ENCODE measurements at regions of chr4 and their contacts with region 1.

Region 1: DNA sequence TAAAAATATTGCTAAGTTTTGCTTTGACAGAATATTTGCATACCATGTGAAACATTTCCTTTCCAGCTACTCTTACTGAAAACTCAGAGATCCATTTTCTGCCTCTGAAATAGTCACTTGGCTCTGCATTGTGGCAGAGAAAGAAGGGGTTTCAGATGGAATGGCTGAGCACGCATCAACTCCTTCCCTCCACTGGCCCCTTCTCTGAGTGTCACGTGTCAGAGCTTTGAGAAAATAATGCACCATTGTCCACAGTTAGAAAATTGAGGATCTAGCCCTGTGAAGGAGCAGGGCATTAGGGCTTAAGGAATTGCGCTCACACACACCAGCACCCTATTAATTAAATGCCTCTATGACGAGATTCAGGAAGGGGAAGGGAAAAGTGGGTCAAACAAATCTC is 78.8 kb upstream of the FAT4 start:
- DNase-seq: no peak
- ATAC-seq: no peak
- H3K4me3 ChIP-seq: no peak overlapping the region
- H3K27ac ChIP-seq: no peak overlapping the region
- H3K4me1 ChIP-seq: no peaks in the 10 kb centered on the region
- H3K27me3 ChIP-seq: no peaks in the 10 kb centered on the region
- CTCF ChIP-seq: no peak

Region 2: GRCh38 chr4:124712372-124713184 is 523.4 kb before region 1 on chr4 and contains the start of gene ANKRD50:
- CTCF ChIA-PET with region 1: no interaction called
- POLR2A ChIA-PET with region 1: no interaction called
- in situ Hi-C with region 1: no loop called
- intact Hi-C with region 1: loop called (anchors 10 kb)
- DNase-seq: no peak
- ATAC-seq: peak; percentile 89
- H3K4me3 ChIP-seq: peak within 1 kb of the TSS; percentile 54 to 87
- H3K27ac ChIP-seq: peak within 1 kb of the TSS; percentile 96
- H3K4me1 ChIP-seq: peaks cover 24% of the 10 kb centered on the region
- H3K27me3 ChIP-seq: no peaks in the 10 kb centered on the region
- CTCF ChIP-seq: no peak
- total RNA-seq, gene ANKRD50: 14.3 TPM